Endothelial cell of umbilical vein (primary cell): ENCODE measurements at regions of chr17 and their contacts with region 1.

Region 1: GRCh38 chr17:7856883-7857723 is at the start of gene NAA38:
- DNase-seq: peak; percentile 99
- H3K4me3 ChIP-seq: peak within 1 kb of the TSS; percentile 53 to 78 (median 54)
- H3K27ac ChIP-seq: peak within 1 kb of the TSS; percentile 96
- H3K4me1 ChIP-seq: peaks cover 35% of the 10 kb centered on the region
- H3K27me3 ChIP-seq: no peaks in the 10 kb centered on the region
- CTCF ChIP-seq: peak; percentile 17 to 34
- POLR2A ChIP-seq: peak; percentile 84
- total RNA-seq, gene NAA38: 119 TPM in 2 replicates

Region 2: GRCh38 chr17:7239091-7240027 is 617.7 kb before region 1 on chr17 and contains the start of gene PHF23:
- CTCF ChIA-PET with region 1: no interaction called
- POLR2A ChIA-PET with region 1: no interaction called
- dilution Hi-C with region 1: no loop called
- intact Hi-C with region 1: loop called (anchors 5 kb)
- DNase-seq: peak; percentile 100
- H3K4me3 ChIP-seq: peak within 1 kb of the TSS; percentile 71 to 96 (median 83)
- H3K27ac ChIP-seq: peak within 1 kb of the TSS; percentile 14
- H3K4me1 ChIP-seq: peaks cover 35% of the 10 kb centered on the region
- H3K27me3 ChIP-seq: no peaks in the 10 kb centered on the region
- CTCF ChIP-seq: no peak
- POLR2A ChIP-seq: peak; percentile 51
- total RNA-seq, gene PHF23: 54.7 and 56.2 TPM in 2 replicates

Region 3: DNA sequence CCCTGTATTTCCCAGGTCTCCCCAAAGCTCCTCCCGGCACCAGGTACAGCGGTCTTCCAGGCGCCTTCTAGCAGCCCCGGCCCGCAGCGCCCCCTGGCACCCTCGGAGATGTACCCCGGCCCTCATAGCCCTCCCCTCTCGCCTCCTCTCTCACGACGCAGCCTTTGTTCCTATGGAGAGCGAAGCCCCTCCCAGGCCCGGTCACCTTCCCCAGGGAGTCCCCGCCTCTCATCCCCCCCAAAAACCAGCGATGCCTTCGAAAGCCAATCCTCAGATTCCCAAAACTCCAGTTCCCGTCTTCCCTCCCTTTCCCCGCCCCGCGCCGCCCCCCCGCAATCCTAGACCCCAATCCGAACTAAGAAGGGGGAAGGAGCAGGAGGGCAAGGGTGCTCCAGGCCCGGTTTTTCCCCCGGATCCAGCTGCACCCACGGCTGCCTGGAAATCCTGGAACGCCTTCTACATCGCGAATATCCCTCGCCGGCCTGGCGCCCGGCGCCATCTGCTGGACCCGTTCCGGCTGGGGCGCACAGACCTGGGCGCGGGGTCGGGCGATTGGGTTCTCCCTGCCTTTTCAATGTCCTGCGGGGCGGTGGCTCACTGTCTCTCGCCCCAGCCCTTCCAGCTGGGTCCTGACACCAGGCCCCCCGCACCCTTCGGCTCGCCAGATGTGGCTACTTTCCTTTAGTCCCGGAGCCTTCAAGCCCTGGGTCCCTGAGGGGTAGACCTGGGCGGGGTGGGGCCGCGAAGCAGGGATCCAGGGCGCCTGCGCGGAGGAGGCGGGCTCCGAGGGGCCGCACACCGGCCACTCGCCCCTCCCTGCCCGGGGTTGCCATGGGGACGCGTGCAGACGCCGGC is 140.0 kb before region 1 on chr17 and contains the start of gene DNAH2:
- CTCF ChIA-PET with region 1: no interaction called
- POLR2A ChIA-PET with region 1: no interaction called
- dilution Hi-C with region 1: no loop called
- intact Hi-C with region 1: no loop called
- DNase-seq: peak; percentile 81
- H3K4me3 ChIP-seq: peak within 1 kb of the TSS; percentile 53 to 69 (median 63)
- H3K27ac ChIP-seq: no peak within 1 kb of the TSS
- H3K4me1 ChIP-seq: peaks cover 5% of the 10 kb centered on the region
- H3K27me3 ChIP-seq: peaks cover 23 to 29% of the 10 kb centered on the region in 2 experiments
- CTCF ChIP-seq: peak; percentile 35 to 66
- POLR2A ChIP-seq: no peak
- total RNA-seq, gene DNAH2: 0.11 TPM in 1 of 2 replicates, not detected in the other

Region 4: DNA sequence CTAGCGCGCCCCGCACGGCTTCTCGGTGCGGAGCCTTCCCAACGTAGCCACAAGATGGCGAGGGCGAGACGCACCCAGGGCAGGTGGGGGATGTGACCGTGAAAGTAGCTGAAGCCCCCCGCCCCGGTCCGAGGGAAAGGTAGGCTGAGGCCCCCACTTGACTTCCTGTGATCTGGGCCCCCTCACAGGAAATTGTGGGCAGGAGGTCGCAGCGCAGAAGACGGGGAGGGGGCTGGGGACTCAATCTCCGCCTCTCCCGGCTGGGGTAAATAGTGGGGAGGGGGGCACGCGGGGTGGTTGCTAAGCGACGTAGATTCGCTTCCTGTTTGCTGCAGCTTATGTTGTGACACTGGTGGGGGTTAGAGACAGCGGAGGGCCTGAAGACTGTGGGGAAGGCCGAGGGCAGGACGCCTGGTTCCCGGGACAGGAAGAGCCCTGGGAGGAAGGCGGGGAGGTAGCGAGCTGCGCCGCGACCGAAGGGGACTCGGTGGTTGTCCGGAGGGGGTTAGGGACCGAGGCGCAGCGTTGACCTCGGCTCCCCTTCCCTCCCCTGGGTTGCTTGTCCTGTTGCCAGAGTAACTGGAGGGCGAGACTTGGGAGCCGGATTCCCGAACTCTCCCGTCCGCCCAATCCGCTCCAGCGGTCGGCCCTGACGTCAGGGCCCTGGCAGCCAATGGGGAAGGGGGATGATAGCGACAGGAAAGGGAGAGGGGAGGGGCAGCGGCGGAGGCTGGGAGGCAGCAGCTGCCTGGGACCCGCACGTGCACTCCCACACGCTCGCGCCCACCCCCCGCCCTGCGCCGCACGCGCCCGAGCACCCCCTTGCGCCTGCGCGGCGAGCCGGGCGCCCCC is 21.9 kb before region 1 on chr17:
- CTCF ChIA-PET with region 1: interaction called, 28 read pairs
- POLR2A ChIA-PET with region 1: interaction called, 3 read pairs
- dilution Hi-C with region 1: no loop called
- intact Hi-C with region 1: loop called (anchors 1 kb)
- DNase-seq: peak; percentile 100
- H3K4me3 ChIP-seq: peak overlapping the region; percentile 34 to 52 (median 46)
- H3K27ac ChIP-seq: peak overlapping the region; percentile 94
- H3K4me1 ChIP-seq: peaks cover 32% of the 10 kb centered on the region
- H3K27me3 ChIP-seq: peaks cover 0 to 3% of the 10 kb centered on the region in 2 experiments
- CTCF ChIP-seq: peak; percentile 65 to 92
- POLR2A ChIP-seq: no peak

Region 5: GRCh38 chr17:7887482-7888183 is 30.5 kb after region 1 on chr17:
- CTCF ChIA-PET with region 1: interaction called, 6 read pairs
- POLR2A ChIA-PET with region 1: no interaction called
- dilution Hi-C with region 1: no loop called
- intact Hi-C with region 1: loop called (anchors 1 kb)
- DNase-seq: peak; percentile 100
- H3K4me3 ChIP-seq: peak overlapping the region in 2 of 3 experiments; percentile 50 to 76
- H3K27ac ChIP-seq: peak overlapping the region; percentile 94
- H3K4me1 ChIP-seq: peaks cover 42% of the 10 kb centered on the region
- H3K27me3 ChIP-seq: no peaks in the 10 kb centered on the region
- CTCF ChIP-seq: no peak
- POLR2A ChIP-seq: peak; percentile 74